ENCODE measurements at regions of chr3 and their contacts with region 1.

Region 1: GRCh38 chr3:8324740-8325139 is 176.9 kb upstream of the LMCD1 start:
- DNase-seq: peak; percentile 58
- ATAC-seq: peak; percentile 85
- H3K4me3 ChIP-seq: no peak overlapping the region
- H3K27ac ChIP-seq: no peak overlapping the region
- H3K4me1 ChIP-seq: peaks cover 9% of the 10 kb centered on the region
- H3K27me3 ChIP-seq: peaks cover 14% of the 10 kb centered on the region; the same call in 1 of the 2 replicates
- CTCF ChIP-seq: peak; percentile 71

Region 2: GRCh38 chr3:6962801-6963200 is 1361.9 kb before region 1 on chr3:
- CTCF ChIA-PET with region 1: interaction called, 11 read pairs
- POLR2A ChIA-PET with region 1: no interaction called
- intact Hi-C with region 1: no loop called
- DNase-seq: no peak
- ATAC-seq: no peak
- H3K4me3 ChIP-seq: no peak overlapping the region
- H3K27ac ChIP-seq: no peak overlapping the region
- H3K4me1 ChIP-seq: no peaks in the 10 kb centered on the region
- H3K27me3 ChIP-seq: no peaks in the 10 kb centered on the region
- CTCF ChIP-seq: no peak

Region 3: DNA sequence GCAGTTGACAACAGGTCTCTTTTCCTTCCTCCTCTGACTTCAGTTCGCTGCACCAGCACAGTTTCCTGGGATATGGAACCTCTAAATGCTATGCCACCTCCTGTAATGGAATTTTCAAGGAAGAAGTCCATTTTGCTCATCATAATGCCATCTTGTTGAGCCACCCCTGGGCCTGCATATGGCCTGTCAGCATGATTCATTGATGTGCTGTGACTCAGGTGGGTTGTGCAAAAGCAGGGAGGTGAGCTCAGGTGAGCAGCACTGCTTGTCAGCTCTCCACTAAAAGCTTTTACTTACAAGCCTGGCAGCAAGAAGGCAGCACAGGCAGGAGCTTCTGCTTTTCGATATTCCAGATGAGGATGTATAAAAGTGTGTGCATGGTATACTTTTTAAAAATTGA is 70.3 kb before region 1 on chr3:
- CTCF ChIA-PET with region 1: no interaction called
- POLR2A ChIA-PET with region 1: no interaction called
- intact Hi-C with region 1: no loop called
- DNase-seq: peak; percentile 56
- ATAC-seq: no peak
- H3K4me3 ChIP-seq: no peak overlapping the region
- H3K27ac ChIP-seq: no peak overlapping the region
- H3K4me1 ChIP-seq: no peaks in the 10 kb centered on the region
- H3K27me3 ChIP-seq: 0 out of 2 replicates have a peak, but pooled peaks cover under 1% of the 10 kb centered on the region
- CTCF ChIP-seq: no peak

Region 4: GRCh38 chr3:8416965-8417364 is 92.2 kb after region 1 on chr3:
- CTCF ChIA-PET with region 1: interaction called, 25 read pairs
- POLR2A ChIA-PET with region 1: no interaction called
- intact Hi-C with region 1: loop called (anchors 1 kb)
- DNase-seq: peak; percentile 60
- ATAC-seq: peak; percentile 81
- H3K4me3 ChIP-seq: peak overlapping the region; percentile 11; the same call in 1 of the 2 replicates
- H3K27ac ChIP-seq: no peak overlapping the region
- H3K4me1 ChIP-seq: no peaks in the 10 kb centered on the region
- H3K27me3 ChIP-seq: no peaks in the 10 kb centered on the region
- CTCF ChIP-seq: no peak

Region 5: GRCh38 chr3:8622873-8623691 is 298.3 kb after region 1 on chr3:
- CTCF ChIA-PET with region 1: no interaction called
- POLR2A ChIA-PET with region 1: no interaction called
- intact Hi-C with region 1: loop called (anchors 10 kb)
- DNase-seq: peak; percentile 76
- ATAC-seq: peak; percentile 89
- H3K4me3 ChIP-seq: no peak overlapping the region
- H3K27ac ChIP-seq: no peak overlapping the region
- H3K4me1 ChIP-seq: peaks cover 30% of the 10 kb centered on the region
- H3K27me3 ChIP-seq: no peaks in the 10 kb centered on the region
- CTCF ChIP-seq: peak; percentile 98

Measured in PC-3 (cell line).